PC-3 (cell line): ENCODE measurements at regions of chr12 and their contacts with region 1.

Region 1: GRCh38 chr12:118302066-118302465 is 70.6 kb downstream of the TAOK3 start:
- DNase-seq: peak; percentile 99
- ATAC-seq: peak; percentile 93
- H3K4me3 ChIP-seq: no peak overlapping the region
- H3K27ac ChIP-seq: peak overlapping the region; percentile 16
- H3K4me1 ChIP-seq: peaks cover 39% of the 10 kb centered on the region
- H3K27me3 ChIP-seq: no peaks in the 10 kb centered on the region
- CTCF ChIP-seq: no peak

Region 2: GRCh38 chr12:117900561-117900960 is 401.5 kb before region 1 on chr12:
- CTCF ChIA-PET with region 1: no interaction called
- POLR2A ChIA-PET with region 1: no interaction called
- intact Hi-C with region 1: no loop called
- DNase-seq: peak; percentile 96
- ATAC-seq: peak; percentile 99
- H3K4me3 ChIP-seq: peak overlapping the region; percentile 19; the same call in 1 of the 2 replicates
- H3K27ac ChIP-seq: no peak overlapping the region
- H3K4me1 ChIP-seq: peaks cover 12% of the 10 kb centered on the region
- H3K27me3 ChIP-seq: no peaks in the 10 kb centered on the region
- CTCF ChIP-seq: no peak

Region 3: DNA sequence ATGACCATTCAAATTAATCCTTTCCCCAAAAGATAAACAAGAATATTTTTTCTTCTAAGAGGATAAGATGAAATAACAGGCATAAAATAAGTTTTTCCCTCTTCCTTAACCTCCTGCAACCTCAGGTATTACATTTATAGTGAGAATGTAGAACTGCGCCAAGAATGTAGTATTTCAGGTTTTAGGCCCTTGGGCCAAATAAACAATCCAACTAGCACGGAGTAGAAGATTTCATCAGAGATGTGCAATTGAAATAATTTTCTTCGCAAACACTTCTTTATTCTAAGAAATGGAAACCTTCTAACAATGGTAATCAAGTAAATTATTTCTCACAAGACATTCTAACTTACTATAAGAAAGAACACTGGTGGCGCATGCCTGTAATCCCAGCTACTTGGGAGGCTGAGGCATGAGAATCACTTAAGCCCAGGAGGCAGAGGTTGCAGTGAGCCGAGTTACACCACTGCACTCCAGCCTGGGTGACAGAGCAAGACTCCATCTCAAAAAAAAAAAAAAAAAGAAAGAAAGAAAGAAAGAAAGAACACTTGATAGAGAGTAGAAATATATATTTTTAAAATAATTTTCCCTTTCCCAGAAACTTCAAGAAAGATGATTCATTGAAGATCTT is 30.2 kb before region 1 on chr12:
- CTCF ChIA-PET with region 1: no interaction called
- POLR2A ChIA-PET with region 1: interaction called, 3 read pairs
- intact Hi-C with region 1: loop called (anchors 2 kb)
- DNase-seq: peak; percentile 98
- ATAC-seq: peak; percentile 90
- H3K4me3 ChIP-seq: peak overlapping the region; percentile 32; the same call in 1 of the 2 replicates
- H3K27ac ChIP-seq: peak overlapping the region; percentile 32
- H3K4me1 ChIP-seq: peaks cover 18% of the 10 kb centered on the region
- H3K27me3 ChIP-seq: no peaks in the 10 kb centered on the region
- CTCF ChIP-seq: no peak

Region 4: DNA sequence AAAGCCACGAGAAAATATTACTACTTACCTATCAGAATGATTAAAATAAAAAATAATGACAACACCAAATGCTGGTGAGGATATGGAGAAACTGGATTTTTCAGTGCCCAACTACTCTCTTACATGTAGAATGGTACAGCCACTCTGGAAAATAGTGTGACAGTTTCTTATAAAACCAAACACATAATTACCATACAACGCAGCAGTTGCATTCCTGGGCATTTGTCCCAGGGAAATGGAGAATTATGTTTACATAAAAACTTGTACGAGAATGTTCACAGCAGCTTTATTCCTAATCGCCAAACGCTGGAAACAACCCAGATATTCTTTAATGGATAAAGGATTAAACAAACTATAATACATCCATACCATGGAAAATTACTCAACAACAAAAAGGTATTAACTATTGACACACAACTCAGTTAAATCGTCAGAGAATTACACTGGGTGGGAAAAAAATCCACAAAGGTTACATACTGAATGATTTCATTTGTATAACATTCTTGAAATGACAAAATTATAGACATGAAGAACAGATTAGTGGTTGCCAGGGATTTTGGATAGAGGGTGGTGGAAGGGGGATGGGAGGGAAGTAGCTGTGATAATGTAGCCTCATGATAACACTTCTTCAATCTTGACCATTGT is 35.2 kb after region 1 on chr12:
- CTCF ChIA-PET with region 1: interaction called, 10 read pairs
- POLR2A ChIA-PET with region 1: no interaction called
- intact Hi-C with region 1: loop called (anchors 2 kb)
- DNase-seq: peak; percentile 67
- ATAC-seq: peak; percentile 37
- H3K4me3 ChIP-seq: no peak overlapping the region
- H3K27ac ChIP-seq: peak overlapping the region; percentile 29
- H3K4me1 ChIP-seq: peaks cover 34% of the 10 kb centered on the region
- H3K27me3 ChIP-seq: no peaks in the 10 kb centered on the region
- CTCF ChIP-seq: no peak